A673 (cell line): ENCODE measurements at regions of chr11 and their contacts with region 1.

Region 1: GRCh38 chr11:62394825-62395538 is 23.9 kb upstream of the SCGB1A1 start:
- DNase-seq: peak; percentile 93
- H3K4me3 ChIP-seq: peak overlapping the region; percentile 42
- H3K27ac ChIP-seq: no peak overlapping the region
- H3K4me1 ChIP-seq: no peaks in the 10 kb centered on the region
- H3K27me3 ChIP-seq: no peaks in the 10 kb centered on the region
- CTCF ChIP-seq: peak; percentile 87

Region 2: DNA sequence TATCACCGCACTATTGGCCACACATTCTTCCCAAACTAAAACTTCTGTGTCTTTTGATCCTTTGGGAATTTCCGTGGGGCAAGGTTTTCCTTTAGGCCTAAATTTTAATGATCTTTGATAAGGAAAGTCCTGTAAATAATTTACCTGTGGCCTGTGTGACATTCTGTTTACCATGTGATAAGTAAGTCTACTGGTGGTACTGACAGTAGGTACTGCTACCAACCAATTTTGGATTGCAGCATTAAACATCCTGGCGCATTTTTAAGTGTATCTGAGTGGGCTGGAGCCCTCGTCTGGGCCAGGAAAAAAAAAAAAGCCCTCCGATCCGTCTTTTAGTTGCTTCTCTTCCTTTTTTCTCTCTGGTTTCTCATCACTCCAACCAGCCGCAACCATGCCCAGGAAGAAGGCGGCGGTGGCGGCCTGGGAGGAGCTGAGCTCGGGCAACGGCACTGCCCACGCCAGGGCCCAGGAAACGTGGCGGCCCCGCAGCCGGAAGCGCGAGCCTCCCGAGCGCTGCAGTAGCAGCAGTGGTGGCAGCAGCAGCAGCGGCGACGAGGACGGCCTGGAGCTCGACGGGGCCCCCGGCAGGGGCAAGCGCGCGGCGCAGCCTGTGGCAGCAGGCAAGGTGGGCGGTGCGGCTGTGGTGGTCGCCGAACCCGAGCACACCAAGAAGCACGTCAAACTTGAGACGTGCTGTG is 24.1 kb before region 1 on chr11:
- CTCF ChIA-PET with region 1: interaction called, 11 read pairs
- POLR2A ChIA-PET with region 1: no interaction called
- intact Hi-C with region 1: no loop called
- DNase-seq: no peak
- H3K4me3 ChIP-seq: no peak overlapping the region
- H3K27ac ChIP-seq: no peak overlapping the region
- H3K4me1 ChIP-seq: no peaks in the 10 kb centered on the region
- H3K27me3 ChIP-seq: no peaks in the 10 kb centered on the region
- CTCF ChIP-seq: no peak

Region 3: DNA sequence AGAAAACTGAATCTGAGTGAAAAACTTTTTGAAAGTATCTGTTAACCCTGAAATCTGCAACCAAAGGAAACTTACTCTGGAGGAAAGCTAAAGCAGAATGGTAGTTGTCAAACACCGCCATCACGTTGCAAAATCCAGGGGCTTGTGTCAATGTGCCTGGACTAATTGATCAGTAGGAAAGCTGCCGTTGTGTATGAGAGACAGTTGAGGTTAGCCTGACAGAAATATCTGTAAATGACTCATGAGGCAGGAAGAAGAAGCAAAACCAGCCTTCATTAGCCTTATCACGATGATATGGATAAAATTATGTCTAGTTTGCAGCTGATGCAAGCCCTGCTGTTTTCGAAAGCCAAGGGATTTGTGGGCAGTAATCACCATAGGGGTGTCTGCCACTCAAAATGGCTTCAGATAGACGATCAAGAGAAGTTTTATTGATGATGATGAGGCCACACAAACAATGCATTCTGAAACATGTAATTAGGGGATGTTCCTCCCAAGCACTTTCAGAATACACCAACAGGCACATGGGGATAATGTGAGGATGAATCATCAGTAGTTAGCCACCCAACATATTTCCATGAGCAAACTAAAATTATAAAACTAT is 32.8 kb after region 1 on chr11:
- CTCF ChIA-PET with region 1: interaction called, 12 read pairs
- POLR2A ChIA-PET with region 1: no interaction called
- intact Hi-C with region 1: no loop called
- DNase-seq: no peak
- H3K4me3 ChIP-seq: no peak overlapping the region
- H3K27ac ChIP-seq: no peak overlapping the region
- H3K4me1 ChIP-seq: no peaks in the 10 kb centered on the region
- H3K27me3 ChIP-seq: no peaks in the 10 kb centered on the region
- CTCF ChIP-seq: no peak

Region 4: DNA sequence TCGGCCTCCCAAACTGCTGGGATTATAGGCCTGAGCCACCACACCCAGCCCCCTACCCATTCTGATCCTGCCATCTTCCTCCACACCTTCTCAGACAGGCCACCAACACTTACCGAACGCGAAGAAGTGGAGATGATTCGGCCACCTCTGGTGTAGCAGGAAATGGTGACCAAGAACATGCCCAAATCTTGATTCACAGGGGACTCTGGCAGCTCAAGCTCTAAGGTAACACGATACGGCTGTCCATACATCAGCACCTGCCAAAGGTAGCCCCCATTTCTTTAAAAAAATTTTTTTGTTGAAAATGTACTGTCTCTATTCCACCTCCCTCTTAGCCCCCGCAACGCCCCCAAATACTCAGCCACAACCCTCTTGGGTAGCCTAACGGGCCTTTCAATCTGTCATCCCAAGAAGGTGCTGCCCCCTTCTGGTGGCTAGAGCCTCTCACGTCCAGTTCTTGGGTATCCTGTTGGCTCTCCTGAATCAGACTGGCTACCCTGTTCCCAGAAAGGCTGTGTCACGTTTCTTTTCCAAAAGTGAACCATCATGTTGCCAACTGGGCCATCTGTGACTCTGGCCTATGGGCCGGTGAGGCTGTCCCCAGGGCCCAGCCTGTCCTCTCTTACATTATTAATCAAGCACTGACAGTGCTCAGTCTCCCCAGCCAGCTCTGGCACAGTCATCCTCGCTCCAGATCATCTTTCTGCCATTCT is 299.6 kb after region 1 on chr11:
- CTCF ChIA-PET with region 1: interaction called, 4 read pairs
- POLR2A ChIA-PET with region 1: no interaction called
- intact Hi-C with region 1: loop called (anchors 1 kb)
- DNase-seq: peak; percentile 91
- H3K4me3 ChIP-seq: no peak overlapping the region
- H3K27ac ChIP-seq: peak overlapping the region; percentile 4
- H3K4me1 ChIP-seq: peaks cover 5% of the 10 kb centered on the region
- H3K27me3 ChIP-seq: no peaks in the 10 kb centered on the region
- CTCF ChIP-seq: peak; percentile 98

Region 5: DNA sequence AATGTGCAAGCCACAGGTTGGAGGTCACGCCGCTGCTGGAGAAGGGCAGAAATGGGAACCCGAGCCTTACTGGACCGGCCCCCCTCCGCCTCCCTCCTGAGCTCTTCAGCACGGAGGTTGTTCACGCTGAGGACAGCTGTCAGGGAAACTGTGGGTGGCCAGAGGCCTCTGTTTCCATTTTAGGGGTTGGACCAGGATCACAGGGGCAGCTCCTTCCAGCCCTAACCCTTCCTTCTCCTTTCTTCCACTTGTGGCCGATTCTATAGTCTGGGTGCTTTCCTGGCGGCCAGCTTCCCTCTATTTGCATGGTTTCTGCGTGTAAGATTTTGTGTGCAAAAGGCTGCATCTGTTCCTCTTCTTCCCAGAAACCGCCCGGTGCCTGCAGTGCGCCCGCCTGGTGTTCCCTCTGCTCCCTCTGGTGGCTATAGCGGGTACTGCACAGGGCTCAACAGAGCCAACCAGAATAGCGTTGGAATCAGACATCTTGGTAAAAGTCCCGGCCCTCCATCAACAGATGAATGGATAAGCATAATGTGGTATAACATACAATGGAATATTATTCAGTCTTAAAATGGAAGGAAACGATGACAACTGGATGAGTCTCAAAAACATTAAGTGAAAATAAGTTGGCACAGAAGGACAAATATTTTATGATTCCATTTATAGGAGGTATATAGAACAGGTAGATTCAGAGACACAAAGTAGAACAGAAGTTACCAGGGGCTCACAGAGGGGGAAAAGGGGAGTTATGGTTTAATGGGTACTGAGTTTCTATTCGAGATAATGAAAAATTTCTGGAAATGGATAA is 629.1 kb after region 1 on chr11:
- CTCF ChIA-PET with region 1: no interaction called
- POLR2A ChIA-PET with region 1: no interaction called
- intact Hi-C with region 1: loop called (anchors 10 kb)
- DNase-seq: peak; percentile 91
- H3K4me3 ChIP-seq: no peak overlapping the region
- H3K27ac ChIP-seq: no peak overlapping the region
- H3K4me1 ChIP-seq: peaks cover 4% of the 10 kb centered on the region
- H3K27me3 ChIP-seq: no peaks in the 10 kb centered on the region
- CTCF ChIP-seq: peak; percentile 100